Caco-2 (cell line): ENCODE measurements at regions of chr13 and their contacts with region 1.

Region 1: GRCh38 chr13:43132257-43132656 is 108.9 kb downstream of the DNAJC15 start:
- DNase-seq: peak; percentile 75 to 81
- H3K4me3 ChIP-seq: no peak overlapping the region
- H3K4me3 Mint-ChIP-seq: no peak overlapping the region
- H3K27ac Mint-ChIP-seq: no peak overlapping the region
- H3K4me1 ChIP-seq: peaks cover 14% of the 10 kb centered on the region
- H3K4me1 Mint-ChIP-seq: peaks cover 21% of the 10 kb centered on the region
- H3K27me3 ChIP-seq: no peaks in the 10 kb centered on the region; the same call in 1 of the 2 replicates
- H3K27me3 Mint-ChIP-seq: no peaks in the 10 kb centered on the region
- CTCF ChIP-seq: peak; percentile 56 to 74

Region 2: DNA sequence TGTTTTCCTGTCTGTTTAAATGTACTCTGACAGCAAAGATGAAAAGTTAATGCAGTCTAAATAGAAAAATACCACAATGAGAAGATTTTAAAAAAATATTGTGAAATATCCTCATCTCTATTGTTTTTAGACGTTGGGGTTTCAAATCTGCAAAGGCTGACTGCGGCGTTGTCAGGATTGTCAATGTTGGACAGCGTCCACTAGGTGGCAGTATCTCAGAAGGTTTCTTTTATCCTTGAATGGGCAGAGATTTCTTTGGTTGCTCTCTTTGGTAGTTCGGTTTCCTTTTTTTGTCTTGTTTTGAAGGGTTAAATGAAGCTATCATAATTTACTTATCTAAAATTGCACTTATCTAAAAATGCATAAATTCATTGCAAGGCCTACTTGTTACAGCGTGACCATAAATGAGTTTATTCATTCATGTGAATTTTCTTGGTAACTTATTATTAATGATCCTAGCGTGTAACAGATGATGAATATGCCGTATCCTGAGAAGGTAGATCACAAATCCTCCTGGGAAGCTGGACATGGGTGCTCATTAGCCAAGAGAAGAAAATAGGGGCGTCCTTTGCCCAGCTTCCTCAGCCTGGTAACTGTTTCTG is 537.2 kb before region 1 on chr13:
- CTCF ChIA-PET with region 1: no interaction called
- POLR2A ChIA-PET with region 1: no interaction called
- intact Hi-C with region 1: loop called (anchors 2 kb)
- DNase-seq: peak; percentile 53 to 65
- H3K4me3 ChIP-seq: no peak overlapping the region
- H3K4me3 Mint-ChIP-seq: no peak overlapping the region
- H3K27ac Mint-ChIP-seq: no peak overlapping the region
- H3K4me1 ChIP-seq: no peaks in the 10 kb centered on the region
- H3K4me1 Mint-ChIP-seq: no peaks in the 10 kb centered on the region
- H3K27me3 ChIP-seq: no peaks in the 10 kb centered on the region
- H3K27me3 Mint-ChIP-seq: peaks cover 23% of the 10 kb centered on the region
- CTCF ChIP-seq: peak; percentile 87 to 89

Region 3: DNA sequence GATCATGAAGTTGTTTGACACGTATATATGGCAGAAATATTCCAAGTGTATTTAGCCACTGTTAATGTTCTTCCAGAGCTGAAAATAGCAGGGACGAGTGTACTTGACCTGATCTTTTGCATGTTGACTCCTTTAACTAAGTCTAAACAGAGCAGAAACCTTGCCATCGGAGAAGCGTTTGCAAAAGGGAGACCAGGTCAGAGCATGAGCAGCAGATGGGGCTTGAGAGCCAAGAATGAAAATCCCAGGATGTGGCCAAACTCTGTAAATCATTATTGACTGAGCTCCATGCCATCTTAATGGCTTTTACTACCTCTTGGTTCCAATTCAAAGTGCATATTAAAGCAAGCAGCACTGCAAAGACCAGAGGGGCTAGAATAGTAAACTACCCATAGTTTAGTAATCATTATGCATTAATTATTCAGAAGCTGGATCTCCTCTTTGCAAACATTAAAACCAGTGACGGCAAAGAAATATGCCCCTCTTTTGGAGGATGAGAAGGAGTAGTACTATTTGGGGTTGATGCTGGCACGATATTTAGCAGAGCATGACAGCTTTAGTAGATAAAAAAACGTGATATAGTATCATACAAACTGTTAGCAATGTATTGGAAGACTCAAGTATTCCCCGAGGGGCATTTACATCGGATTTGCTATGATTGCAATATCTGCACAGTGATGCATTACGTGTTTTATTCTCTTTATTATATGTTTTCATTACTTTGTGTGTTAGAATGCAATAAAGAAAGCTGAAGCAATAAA is 295.1 kb before region 1 on chr13:
- CTCF ChIA-PET with region 1: interaction called, 13 read pairs
- POLR2A ChIA-PET with region 1: no interaction called
- intact Hi-C with region 1: loop called (anchors 1 kb)
- DNase-seq: peak; percentile 52 to 59
- H3K4me3 ChIP-seq: no peak overlapping the region
- H3K4me3 Mint-ChIP-seq: no peak overlapping the region
- H3K27ac Mint-ChIP-seq: no peak overlapping the region
- H3K4me1 ChIP-seq: peaks cover 8% of the 10 kb centered on the region; the same call in 1 of the 2 replicates
- H3K4me1 Mint-ChIP-seq: peaks cover 9% of the 10 kb centered on the region
- H3K27me3 ChIP-seq: no peaks in the 10 kb centered on the region
- H3K27me3 Mint-ChIP-seq: peaks cover 6% of the 10 kb centered on the region
- CTCF ChIP-seq: peak; percentile 38 to 52

Region 4: GRCh38 chr13:42875475-42876269 is 256.6 kb before region 1 on chr13:
- CTCF ChIA-PET with region 1: interaction called, 3 read pairs
- POLR2A ChIA-PET with region 1: no interaction called
- intact Hi-C with region 1: loop called (anchors 2 kb)
- DNase-seq: peak in 1 of 2 experiments; percentile 10
- H3K4me3 ChIP-seq: no peak overlapping the region
- H3K4me3 Mint-ChIP-seq: no peak overlapping the region
- H3K27ac Mint-ChIP-seq: no peak overlapping the region
- H3K4me1 ChIP-seq: peaks cover 10% of the 10 kb centered on the region; the same call in 1 of the 2 replicates
- H3K4me1 Mint-ChIP-seq: peaks cover 9% of the 10 kb centered on the region
- H3K27me3 ChIP-seq: no peaks in the 10 kb centered on the region
- H3K27me3 Mint-ChIP-seq: no peaks in the 10 kb centered on the region
- CTCF ChIP-seq: peak in 1 of 2 experiments; percentile 10

Region 5: GRCh38 chr13:43085545-43085944 is 46.7 kb before region 1 on chr13:
- CTCF ChIA-PET with region 1: no interaction called
- POLR2A ChIA-PET with region 1: no interaction called
- intact Hi-C with region 1: loop called (anchors 2 kb)
- DNase-seq: no peak
- H3K4me3 ChIP-seq: no peak overlapping the region
- H3K4me3 Mint-ChIP-seq: no peak overlapping the region
- H3K27ac Mint-ChIP-seq: no peak overlapping the region
- H3K4me1 ChIP-seq: no peaks in the 10 kb centered on the region
- H3K4me1 Mint-ChIP-seq: peaks cover 29% of the 10 kb centered on the region
- H3K27me3 ChIP-seq: no peaks in the 10 kb centered on the region
- H3K27me3 Mint-ChIP-seq: no peaks in the 10 kb centered on the region
- CTCF ChIP-seq: peak; percentile 46 to 55

Region 6: GRCh38 chr13:43113603-43114002 is 18.7 kb before region 1 on chr13:
- CTCF ChIA-PET with region 1: interaction called, 3 read pairs
- POLR2A ChIA-PET with region 1: no interaction called
- intact Hi-C with region 1: loop called (anchors 2 kb)
- DNase-seq: peak; percentile 61 to 69
- H3K4me3 ChIP-seq: no peak overlapping the region
- H3K4me3 Mint-ChIP-seq: peak overlapping the region; percentile 13
- H3K27ac Mint-ChIP-seq: no peak overlapping the region
- H3K4me1 ChIP-seq: peaks cover 32% of the 10 kb centered on the region
- H3K4me1 Mint-ChIP-seq: peaks cover 45% of the 10 kb centered on the region
- H3K27me3 ChIP-seq: no peaks in the 10 kb centered on the region
- H3K27me3 Mint-ChIP-seq: no peaks in the 10 kb centered on the region
- CTCF ChIP-seq: no peak

Region 7: DNA sequence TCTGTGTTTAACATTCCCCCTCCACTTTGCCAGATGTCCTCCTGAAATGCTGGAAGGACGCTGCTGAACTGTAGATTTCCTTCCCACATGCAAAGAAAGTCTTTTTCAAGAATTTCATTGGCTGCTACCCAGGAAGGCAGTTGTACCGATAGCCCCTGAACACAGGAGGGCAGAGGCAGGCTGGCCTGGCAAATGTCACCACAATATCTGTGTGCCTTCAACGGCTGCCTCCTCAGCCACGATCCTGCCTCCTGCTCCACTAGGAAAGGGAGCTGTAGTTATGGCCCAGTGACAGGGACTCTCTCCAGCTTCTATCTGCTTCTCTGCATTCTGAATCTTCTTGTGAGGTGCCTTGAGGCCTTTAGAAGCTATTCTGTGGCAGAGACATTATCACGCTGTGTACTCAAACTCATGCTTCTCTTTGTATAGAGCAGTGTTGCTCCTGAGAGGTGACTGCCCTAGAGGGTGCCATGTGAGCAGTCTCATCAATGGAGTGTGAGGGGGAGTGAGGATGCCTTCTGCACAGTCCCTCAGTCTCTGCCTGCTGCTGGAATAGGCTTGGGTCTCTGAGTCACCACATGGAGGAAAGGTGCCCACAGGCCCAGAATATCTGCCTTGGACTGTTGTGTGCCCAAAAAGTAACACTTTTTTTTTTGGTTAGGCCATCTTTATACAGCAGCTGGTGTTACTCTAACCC is 170.9 kb after region 1 on chr13:
- CTCF ChIA-PET with region 1: no interaction called
- POLR2A ChIA-PET with region 1: no interaction called
- intact Hi-C with region 1: no loop called
- DNase-seq: peak; percentile 72 to 75
- H3K4me3 ChIP-seq: no peak overlapping the region
- H3K4me3 Mint-ChIP-seq: no peak overlapping the region
- H3K27ac Mint-ChIP-seq: no peak overlapping the region
- H3K4me1 ChIP-seq: no peaks in the 10 kb centered on the region
- H3K4me1 Mint-ChIP-seq: peaks cover 22% of the 10 kb centered on the region
- H3K27me3 ChIP-seq: no peaks in the 10 kb centered on the region
- H3K27me3 Mint-ChIP-seq: no peaks in the 10 kb centered on the region
- CTCF ChIP-seq: peak; percentile 59 to 85

Region 8: DNA sequence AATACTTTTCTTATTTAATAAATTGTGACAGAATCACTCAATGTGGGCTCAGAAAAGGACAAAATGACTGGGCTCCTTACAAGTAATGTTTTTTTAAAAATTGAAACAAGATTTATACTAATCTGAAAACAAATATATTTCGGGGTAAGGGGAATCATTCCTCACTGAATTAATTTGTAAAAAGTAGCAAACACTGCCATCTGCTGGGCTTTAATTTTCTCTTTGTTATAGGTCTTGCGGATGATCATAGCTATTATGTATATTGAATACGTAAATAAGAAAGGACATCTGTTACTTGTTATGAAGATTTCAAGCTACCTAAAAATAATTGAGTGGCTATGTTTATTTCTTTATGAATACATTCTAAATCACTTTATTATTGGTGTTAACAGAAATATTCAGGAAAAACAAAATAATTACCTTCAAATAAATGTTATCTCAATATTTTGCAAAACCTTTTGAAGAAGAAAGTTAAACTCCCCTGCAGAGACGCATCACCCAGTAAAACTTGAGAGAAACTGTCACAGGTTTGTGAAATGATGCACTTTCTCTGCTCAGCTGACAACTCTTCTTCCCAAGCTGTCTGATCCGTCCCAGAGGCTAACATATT is 672.3 kb after region 1 on chr13:
- CTCF ChIA-PET with region 1: interaction called, 5 read pairs
- POLR2A ChIA-PET with region 1: no interaction called
- intact Hi-C with region 1: loop called (anchors 10 kb)
- DNase-seq: peak in 1 of 2 experiments; percentile 72
- H3K4me3 ChIP-seq: no peak overlapping the region
- H3K4me3 Mint-ChIP-seq: no peak overlapping the region
- H3K27ac Mint-ChIP-seq: no peak overlapping the region
- H3K4me1 ChIP-seq: peaks cover 25% of the 10 kb centered on the region
- H3K4me1 Mint-ChIP-seq: peaks cover 17% of the 10 kb centered on the region
- H3K27me3 ChIP-seq: no peaks in the 10 kb centered on the region
- H3K27me3 Mint-ChIP-seq: no peaks in the 10 kb centered on the region
- CTCF ChIP-seq: peak; percentile 48 to 67